IMR-90 (cell line): ENCODE measurements at regions of chr3 and their contacts with region 1.

Region 1: DNA sequence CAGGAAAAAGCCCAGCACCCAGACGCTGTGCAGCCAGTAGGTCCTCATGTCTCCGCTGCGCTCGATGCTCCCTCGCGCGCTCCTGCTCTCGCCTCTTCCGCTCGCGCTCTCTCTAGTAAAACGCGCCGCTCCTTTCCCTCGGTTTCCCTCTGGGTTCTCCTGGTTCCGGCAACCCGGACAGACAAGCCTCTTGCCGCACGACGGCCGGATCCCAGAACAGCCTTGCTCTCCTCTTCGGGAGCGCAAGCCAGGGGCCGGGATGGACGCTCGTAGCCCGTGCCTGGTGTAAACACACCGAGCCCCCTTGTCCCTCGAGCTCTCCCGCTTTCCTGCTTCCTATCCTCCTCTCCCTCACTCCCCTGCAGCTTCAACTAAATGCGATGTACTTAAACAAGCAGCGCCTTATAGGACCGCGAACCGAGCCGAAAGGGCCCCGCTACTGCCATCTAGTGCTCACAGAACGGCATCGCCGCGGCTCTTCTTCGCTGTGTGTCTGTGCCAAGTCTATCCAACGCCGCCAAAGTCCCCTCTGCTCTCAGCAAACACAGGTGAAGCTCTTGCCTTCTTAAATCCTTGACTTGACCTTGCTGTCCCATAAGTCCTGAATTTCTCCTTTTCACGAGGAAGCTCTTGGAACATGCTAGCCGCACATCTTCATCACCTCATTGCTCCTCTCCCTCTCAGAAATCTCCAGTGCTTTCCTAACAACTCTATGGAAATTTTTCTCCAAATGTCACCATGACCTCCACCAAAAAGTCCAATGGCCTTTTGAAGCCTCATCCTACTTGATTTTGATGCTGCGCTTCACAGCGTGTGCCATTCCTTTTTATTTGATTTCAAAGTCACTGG is 1037.2 kb downstream of the IGSF11 start:
- DNase-seq: peak; percentile 86
- ATAC-seq: peak; percentile 84
- H3K4me3 ChIP-seq: peak overlapping the region; percentile 72
- H3K27ac ChIP-seq: peak overlapping the region; percentile 42
- H3K4me1 ChIP-seq: peaks cover 4% of the 10 kb centered on the region; the same call in 1 of the 2 replicates
- H3K27me3 ChIP-seq: no peaks in the 10 kb centered on the region
- CTCF ChIP-seq: peak; percentile 86
- POLR2A ChIP-seq: peak; percentile 40; the same call in 1 of the 2 replicates
- RAD21 ChIP-seq: peak; percentile 87

Region 2: DNA sequence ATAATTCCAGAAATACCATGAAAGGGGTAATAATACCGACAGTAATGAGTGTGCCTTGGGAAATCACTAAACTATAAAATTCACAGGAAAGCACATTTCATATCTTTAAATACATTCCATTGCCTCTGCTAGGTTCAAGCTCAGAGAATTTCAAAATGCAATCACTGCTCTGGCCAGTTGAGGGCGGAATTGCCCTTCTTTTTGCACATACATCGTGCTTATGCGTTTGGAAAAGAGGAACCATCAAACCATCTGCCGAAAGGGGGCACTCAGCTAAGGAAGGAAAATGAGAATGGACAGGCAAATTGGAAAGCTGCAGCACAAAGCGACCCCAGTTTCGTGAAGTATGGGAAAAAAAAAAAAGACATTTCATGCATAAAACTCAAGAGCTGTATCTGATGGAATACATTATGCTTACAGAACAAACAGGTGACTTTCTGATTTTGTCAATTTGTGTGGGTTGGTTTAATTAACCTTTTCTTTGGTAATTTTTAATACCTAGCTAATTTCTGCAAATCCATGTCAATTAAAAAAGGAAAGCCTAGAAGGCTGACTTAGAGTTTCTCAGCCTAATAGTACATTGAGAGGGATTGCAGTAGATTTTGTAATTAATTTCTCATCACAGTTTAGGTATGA is 1226.5 kb before region 1 on chr3:
- CTCF ChIA-PET with region 1: no interaction called
- POLR2A ChIA-PET with region 1: no interaction called
- dilution Hi-C with region 1: no loop called
- in situ Hi-C with region 1: no loop called
- intact Hi-C with region 1: loop called (anchors 2 kb)
- DNase-seq: peak; percentile 80
- ATAC-seq: peak; percentile 99
- H3K4me3 ChIP-seq: no peak overlapping the region
- H3K27ac ChIP-seq: no peak overlapping the region
- H3K4me1 ChIP-seq: no peaks in the 10 kb centered on the region
- H3K27me3 ChIP-seq: no peaks in the 10 kb centered on the region
- CTCF ChIP-seq: peak; percentile 100
- POLR2A ChIP-seq: no peak
- RAD21 ChIP-seq: peak; percentile 98

Region 3: GRCh38 chr3:117026401-117026800 is 971.0 kb before region 1 on chr3:
- CTCF ChIA-PET with region 1: no interaction called
- POLR2A ChIA-PET with region 1: no interaction called
- dilution Hi-C with region 1: no loop called
- in situ Hi-C with region 1: loop called (anchors 10 kb)
- intact Hi-C with region 1: no loop called
- DNase-seq: no peak
- ATAC-seq: no peak
- H3K4me3 ChIP-seq: no peak overlapping the region
- H3K27ac ChIP-seq: no peak overlapping the region
- H3K4me1 ChIP-seq: no peaks in the 10 kb centered on the region
- H3K27me3 ChIP-seq: no peaks in the 10 kb centered on the region
- CTCF ChIP-seq: no peak
- POLR2A ChIP-seq: no peak
- RAD21 ChIP-seq: no peak

Region 4: DNA sequence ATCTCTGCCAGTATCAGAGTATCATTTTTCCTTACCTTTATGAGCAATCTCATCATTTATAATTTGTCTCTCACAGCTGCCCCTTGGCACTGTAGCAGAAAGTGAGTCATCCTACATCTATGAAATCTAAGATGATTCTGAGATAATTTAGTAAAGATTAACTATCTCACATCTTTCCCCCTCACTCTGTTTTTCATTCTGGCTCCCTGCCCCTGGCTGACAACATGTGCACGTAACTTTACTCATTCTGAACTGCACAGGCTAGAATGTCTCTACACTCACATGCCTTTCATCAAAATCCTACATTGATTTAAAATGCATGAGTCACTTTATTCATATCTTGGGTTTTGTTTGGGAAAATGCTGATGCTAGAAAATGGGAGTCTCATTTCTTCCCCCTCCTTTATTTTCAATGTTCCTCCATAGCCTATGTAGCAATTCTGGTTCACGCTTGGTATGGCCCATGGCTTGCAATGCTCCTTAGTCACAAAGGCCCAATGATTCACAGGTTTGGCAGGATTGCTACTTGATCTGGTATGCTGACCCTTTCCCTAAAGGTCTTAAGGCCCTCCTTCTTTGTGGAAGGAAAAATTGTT is 449.4 kb before region 1 on chr3:
- CTCF ChIA-PET with region 1: no interaction called
- POLR2A ChIA-PET with region 1: no interaction called
- dilution Hi-C with region 1: no loop called
- in situ Hi-C with region 1: no loop called
- intact Hi-C with region 1: loop called (anchors 5 kb)
- DNase-seq: peak; percentile 83
- ATAC-seq: peak; percentile 78
- H3K4me3 ChIP-seq: no peak overlapping the region
- H3K27ac ChIP-seq: peak overlapping the region; percentile 81; the same call in 1 of the 2 replicates
- H3K4me1 ChIP-seq: peaks cover 11% of the 10 kb centered on the region
- H3K27me3 ChIP-seq: no peaks in the 10 kb centered on the region
- CTCF ChIP-seq: no peak
- POLR2A ChIP-seq: no peak
- RAD21 ChIP-seq: no peak

Region 5: DNA sequence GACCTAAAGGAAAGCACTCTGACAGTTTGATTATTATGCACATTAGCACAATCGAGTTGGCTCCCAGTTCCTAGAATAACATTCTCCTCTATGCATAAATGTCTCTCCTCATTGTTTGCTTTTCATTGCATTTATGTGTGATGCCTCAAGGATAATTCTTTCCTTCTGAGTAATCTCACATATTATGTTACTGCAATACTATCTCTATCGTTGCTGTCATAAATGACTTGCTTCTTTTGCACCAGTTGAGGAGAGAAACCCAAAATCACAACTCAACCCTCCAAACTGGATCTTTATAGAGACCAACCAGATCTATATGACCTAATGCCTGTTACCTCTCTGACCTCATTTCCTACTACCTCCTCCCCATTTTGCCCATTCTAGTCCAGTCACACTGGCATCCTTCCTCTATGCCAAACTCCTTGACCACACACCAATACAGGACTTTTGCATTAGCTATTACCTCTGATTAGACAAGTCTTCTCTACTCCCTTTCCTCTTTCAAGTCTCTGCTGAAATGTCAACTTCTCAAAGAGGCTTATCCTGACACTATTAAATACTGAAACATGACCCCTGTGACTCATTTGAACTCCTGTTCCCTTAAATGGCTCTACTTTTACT is 261.8 kb before region 1 on chr3:
- CTCF ChIA-PET with region 1: interaction called, 3 read pairs
- POLR2A ChIA-PET with region 1: no interaction called
- dilution Hi-C with region 1: no loop called
- in situ Hi-C with region 1: no loop called
- intact Hi-C with region 1: loop called (anchors 2 kb)
- DNase-seq: peak; percentile 91
- ATAC-seq: peak; percentile 83
- H3K4me3 ChIP-seq: no peak overlapping the region
- H3K27ac ChIP-seq: peak overlapping the region; percentile 78
- H3K4me1 ChIP-seq: peaks cover 11% of the 10 kb centered on the region
- H3K27me3 ChIP-seq: no peaks in the 10 kb centered on the region
- CTCF ChIP-seq: no peak
- POLR2A ChIP-seq: no peak
- RAD21 ChIP-seq: no peak

Region 6: DNA sequence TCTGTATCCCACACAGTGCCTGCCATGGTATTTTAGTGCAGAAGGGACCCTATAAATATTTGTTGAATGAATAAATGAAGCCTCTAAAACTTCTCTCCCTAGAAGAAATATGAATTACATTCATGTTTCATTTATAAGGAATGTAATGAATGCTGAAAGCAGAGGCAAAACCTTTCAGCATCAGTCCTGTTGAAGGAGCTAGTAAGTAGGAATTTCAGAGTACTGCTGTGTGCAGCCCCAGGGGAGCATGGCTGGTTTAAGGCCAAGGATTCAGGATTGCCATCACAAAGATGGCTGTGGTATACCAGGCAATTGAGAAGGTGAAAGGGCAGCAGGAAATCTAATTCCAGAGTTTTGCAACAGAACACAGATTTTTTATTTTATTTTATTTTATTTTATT is 94.2 kb before region 1 on chr3:
- CTCF ChIA-PET with region 1: no interaction called
- POLR2A ChIA-PET with region 1: no interaction called
- dilution Hi-C with region 1: no loop called
- in situ Hi-C with region 1: no loop called
- intact Hi-C with region 1: loop called (anchors 1 kb)
- DNase-seq: peak; percentile 86
- ATAC-seq: peak; percentile 95
- H3K4me3 ChIP-seq: no peak overlapping the region
- H3K27ac ChIP-seq: no peak overlapping the region
- H3K4me1 ChIP-seq: no peaks in the 10 kb centered on the region
- H3K27me3 ChIP-seq: no peaks in the 10 kb centered on the region
- CTCF ChIP-seq: no peak
- POLR2A ChIP-seq: no peak
- RAD21 ChIP-seq: no peak

Region 7: GRCh38 chr3:118817748-118818165 is 820.3 kb after region 1 on chr3:
- CTCF ChIA-PET with region 1: no interaction called
- POLR2A ChIA-PET with region 1: no interaction called
- dilution Hi-C with region 1: no loop called
- in situ Hi-C with region 1: no loop called
- intact Hi-C with region 1: loop called (anchors 5 kb)
- DNase-seq: peak; percentile 57
- ATAC-seq: peak; percentile 83
- H3K4me3 ChIP-seq: no peak overlapping the region
- H3K27ac ChIP-seq: no peak overlapping the region
- H3K4me1 ChIP-seq: no peaks in the 10 kb centered on the region
- H3K27me3 ChIP-seq: peaks cover 1% of the 10 kb centered on the region; the same call in 1 of the 2 replicates
- CTCF ChIP-seq: peak; percentile 70
- POLR2A ChIP-seq: no peak
- RAD21 ChIP-seq: peak; percentile 62